A549 (cell line): ENCODE measurements at regions of chr17 and their contacts with region 1.

Region 1: DNA sequence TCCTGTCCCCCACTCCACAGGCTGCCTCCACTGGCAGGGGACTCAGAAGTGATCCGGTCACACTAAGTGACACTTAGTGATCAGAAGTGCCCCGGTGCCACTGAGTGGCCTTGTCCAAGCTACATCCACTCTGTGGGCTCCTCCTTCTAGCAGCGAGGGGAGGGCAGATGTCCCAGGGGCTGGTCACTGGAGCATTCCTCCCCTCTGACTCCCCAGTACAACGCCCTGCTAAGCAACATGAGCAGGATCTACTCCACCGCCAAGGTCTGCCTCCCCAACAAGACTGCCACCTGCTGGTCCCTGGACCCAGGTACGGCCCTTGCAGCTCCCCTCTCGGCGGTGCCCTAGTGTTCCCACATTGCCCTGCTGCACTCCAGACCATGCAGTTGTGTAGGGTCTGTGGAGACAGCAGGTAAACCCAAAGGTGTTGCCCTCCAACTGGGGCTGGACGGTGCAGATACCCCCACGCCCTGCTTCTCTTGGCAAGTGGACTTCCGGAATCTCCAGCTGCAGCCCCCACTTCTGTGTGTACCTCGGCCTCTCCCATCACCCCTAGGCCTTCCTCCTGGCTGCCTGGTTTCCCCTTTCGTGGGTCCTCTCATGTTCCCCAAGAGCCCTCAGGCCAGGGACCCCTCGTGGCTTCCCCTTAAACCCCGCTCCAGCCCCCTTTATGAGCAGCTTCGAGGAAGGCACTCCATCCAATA is 2.1 kb downstream of the ACE start:
- DNase-seq: peak; percentile 92 to 99
- ATAC-seq: peak; percentile 84 to 95
- H3K4me3 ChIP-seq: no peak overlapping the region
- H3K27ac ChIP-seq: peak overlapping the region in 1 of 2 experiments; percentile 57; a peak in 3 of 6 replicates
- H3K4me1 ChIP-seq: peaks cover 13% of the 10 kb centered on the region
- CTCF ChIP-seq: peak; percentile 90
- EP300 ChIP-seq: no peak
- POLR2A ChIP-seq: no peak
- RAD21 ChIP-seq: peak; percentile 84 to 88

Region 2: GRCh38 chr17:62671583-62672312 is 807.2 kb before region 1 on chr17:
- CTCF ChIA-PET with region 1: interaction called, 32 read pairs
- POLR2A ChIA-PET with region 1: interaction called, 3 read pairs
- DNase-seq: no peak
- ATAC-seq: peak; percentile 20 to 35; a peak in 4 of 6 replicates
- H3K4me3 ChIP-seq: no peak overlapping the region
- H3K27ac ChIP-seq: no peak overlapping the region
- H3K4me1 ChIP-seq: peaks cover 6% of the 10 kb centered on the region; the same call in 1 of the 3 replicates
- CTCF ChIP-seq: no peak
- EP300 ChIP-seq: no peak
- POLR2A ChIP-seq: no peak
- RAD21 ChIP-seq: no peak

Region 3: GRCh38 chr17:63425482-63425881 is 53.5 kb before region 1 on chr17:
- CTCF ChIA-PET with region 1: interaction called, 347 read pairs
- POLR2A ChIA-PET with region 1: interaction called, 4 read pairs
- DNase-seq: peak; percentile 83 to 86
- ATAC-seq: peak; percentile 63 to 93
- H3K4me3 ChIP-seq: no peak overlapping the region
- H3K27ac ChIP-seq: no peak overlapping the region
- H3K4me1 ChIP-seq: no peaks in the 10 kb centered on the region
- CTCF ChIP-seq: peak; percentile 99
- EP300 ChIP-seq: no peak
- POLR2A ChIP-seq: no peak
- RAD21 ChIP-seq: peak; percentile 97 to 99

Region 4: DNA sequence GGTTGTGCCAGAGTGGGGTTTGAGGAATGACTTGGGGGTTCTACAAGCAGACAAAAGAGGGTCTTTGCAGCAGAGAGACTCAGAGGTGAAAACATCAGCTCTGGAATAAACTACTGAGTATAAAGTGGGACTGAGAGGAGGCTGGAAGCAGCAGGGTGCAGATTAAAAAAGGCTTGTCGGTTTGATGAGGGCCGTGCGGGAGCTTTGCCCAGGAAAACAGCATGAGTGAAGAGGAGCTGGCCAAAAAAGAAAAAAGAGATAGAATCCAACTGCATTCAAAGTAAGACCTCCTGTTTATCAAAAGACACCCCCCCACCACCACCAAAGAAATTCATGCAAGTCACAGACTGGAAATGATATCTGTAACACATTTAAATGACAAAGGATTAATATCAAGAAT is 15.1 kb before region 1 on chr17:
- CTCF ChIA-PET with region 1: interaction called, 51 read pairs
- POLR2A ChIA-PET with region 1: no interaction called
- DNase-seq: no peak
- ATAC-seq: no peak
- H3K4me3 ChIP-seq: no peak overlapping the region
- H3K27ac ChIP-seq: no peak overlapping the region
- H3K4me1 ChIP-seq: peaks cover 25% of the 10 kb centered on the region
- CTCF ChIP-seq: no peak
- EP300 ChIP-seq: no peak
- POLR2A ChIP-seq: no peak
- RAD21 ChIP-seq: no peak

Region 5: GRCh38 chr17:63503334-63503692 is 24.4 kb after region 1 on chr17:
- CTCF ChIA-PET with region 1: interaction called, 111 read pairs
- POLR2A ChIA-PET with region 1: no interaction called
- DNase-seq: no peak
- ATAC-seq: no peak
- H3K4me3 ChIP-seq: no peak overlapping the region
- H3K27ac ChIP-seq: no peak overlapping the region
- H3K4me1 ChIP-seq: no peaks in the 10 kb centered on the region
- CTCF ChIP-seq: no peak
- EP300 ChIP-seq: no peak
- POLR2A ChIP-seq: no peak
- RAD21 ChIP-seq: no peak

Region 6: DNA sequence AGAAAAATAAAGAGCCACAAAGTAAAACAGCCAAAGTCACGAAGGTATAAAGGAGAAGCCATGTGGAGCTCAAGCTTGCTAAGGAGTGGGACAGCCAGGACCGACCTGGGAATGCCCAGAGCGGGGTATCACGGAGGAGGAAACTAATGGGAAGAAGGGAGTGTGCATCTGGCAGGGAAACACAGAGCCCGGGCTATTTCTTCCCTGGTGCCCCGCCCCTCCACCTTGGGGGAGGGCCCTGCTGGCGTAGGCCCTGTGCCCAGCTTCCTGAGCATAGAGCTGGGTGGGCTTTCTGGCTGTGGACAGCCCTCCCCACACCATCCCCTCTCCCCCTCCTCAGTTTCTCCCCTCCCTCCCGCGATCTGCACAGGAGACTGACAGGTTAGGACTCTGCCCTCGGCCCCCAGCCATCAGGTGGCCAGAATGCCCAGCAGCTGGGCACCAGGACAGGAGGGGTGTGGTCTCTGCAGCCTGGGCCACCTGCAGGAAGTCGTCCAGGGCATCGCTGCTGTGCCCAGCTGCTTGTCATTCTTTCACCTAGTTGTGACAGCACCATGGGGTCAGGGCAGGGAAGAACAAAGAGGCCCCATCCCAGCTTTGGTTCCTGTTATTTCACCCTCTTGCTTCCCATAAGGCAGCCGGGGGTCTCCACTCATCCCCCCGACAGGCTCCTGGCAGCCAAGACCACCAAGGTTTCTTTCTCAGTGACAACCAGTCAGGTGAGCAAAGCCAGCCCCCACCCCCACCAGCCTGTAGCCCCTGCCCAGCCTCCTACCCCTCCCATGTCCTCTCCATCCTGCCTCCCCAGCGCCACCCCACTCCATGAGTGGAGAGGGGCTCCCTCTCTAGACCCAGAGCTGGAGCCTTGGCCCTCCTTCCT is 64.2 kb after region 1 on chr17:
- CTCF ChIA-PET with region 1: interaction called, 18 read pairs
- POLR2A ChIA-PET with region 1: no interaction called
- DNase-seq: no peak
- ATAC-seq: peak in 1 of 2 experiments; percentile 35; a peak in 3 of 6 replicates
- H3K4me3 ChIP-seq: no peak overlapping the region
- H3K27ac ChIP-seq: no peak overlapping the region
- H3K4me1 ChIP-seq: no peaks in the 10 kb centered on the region
- CTCF ChIP-seq: no peak
- EP300 ChIP-seq: no peak
- POLR2A ChIP-seq: no peak
- RAD21 ChIP-seq: no peak